Body of pancreas (tissue), 4 donors: ENCODE measurements at regions of chr15 and their contacts with region 1.

Region 1: GRCh38 chr15:94666561-94666960 is 435.2 kb downstream of the MCTP2 start:
- DNase-seq: no peak
- ATAC-seq: no peak
- H3K4me3 ChIP-seq: no peak overlapping the region
- H3K27ac ChIP-seq: no peak overlapping the region
- H3K4me1 ChIP-seq: no peaks in the 10 kb centered on the region
- H3K27me3 ChIP-seq: no peaks in the 10 kb centered on the region
- CTCF ChIP-seq: no peak
- POLR2A ChIP-seq: no peak

Region 2: GRCh38 chr15:94943888-94944287 is 277.3 kb after region 1 on chr15:
- intact Hi-C with region 1: no loop called
- DNase-seq: no peak
- ATAC-seq: no peak
- H3K4me3 ChIP-seq: no peak overlapping the region
- H3K27ac ChIP-seq: no peak overlapping the region
- H3K4me1 ChIP-seq: no peaks in the 10 kb centered on the region
- H3K27me3 ChIP-seq: no peaks in the 10 kb centered on the region
- CTCF ChIP-seq: no peak
- POLR2A ChIP-seq: no peak

Region 3: GRCh38 chr15:95032156-95032555 is 365.6 kb after region 1 on chr15:
- intact Hi-C with region 1: no loop called
- DNase-seq: no peak
- ATAC-seq: no peak
- H3K4me3 ChIP-seq: no peak overlapping the region
- H3K27ac ChIP-seq: no peak overlapping the region
- H3K4me1 ChIP-seq: no peaks in the 10 kb centered on the region
- H3K27me3 ChIP-seq: no peaks in the 10 kb centered on the region
- CTCF ChIP-seq: no peak
- POLR2A ChIP-seq: no peak

Region 4: DNA sequence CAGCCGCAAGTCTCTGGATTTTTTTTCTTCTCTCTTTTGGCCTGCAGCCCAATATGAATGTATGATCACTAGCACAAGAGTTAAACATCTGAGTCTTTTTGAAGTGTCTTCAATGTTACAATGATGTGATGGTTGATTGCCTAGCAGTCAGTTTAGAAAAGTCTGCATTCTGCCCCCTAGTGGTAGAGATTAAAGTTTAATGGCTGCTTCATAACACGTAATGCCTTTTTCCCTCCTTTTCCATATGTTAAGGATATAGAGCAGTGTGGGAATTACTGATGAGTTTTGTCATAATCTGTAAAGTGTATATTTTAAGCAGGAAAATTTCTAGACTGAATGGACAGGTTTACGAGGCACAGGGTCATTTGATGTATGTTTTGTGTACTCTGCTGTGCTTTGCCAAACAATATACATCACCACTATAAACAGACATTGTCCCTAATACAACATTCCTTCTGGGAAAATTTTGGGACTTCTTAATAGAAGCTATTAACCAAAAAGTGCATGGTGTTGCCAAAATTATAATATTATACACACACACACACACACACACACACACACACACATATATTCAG is 625.4 kb after region 1 on chr15:
- intact Hi-C with region 1: loop called (anchors 10 kb)
- DNase-seq: peak in 1 of 4 donors; percentile 6
- ATAC-seq: no peak
- H3K4me3 ChIP-seq: no peak overlapping the region
- H3K27ac ChIP-seq: no peak overlapping the region
- H3K4me1 ChIP-seq: peaks cover 20% of the 10 kb centered on the region
- H3K27me3 ChIP-seq: no peaks in the 10 kb centered on the region
- CTCF ChIP-seq: peak; percentile 30 to 62 (median 56)
- POLR2A ChIP-seq: no peak